Stomach (tissue), 19 donors: ENCODE measurements at regions of chr17 and their contacts with region 1.

Region 1: DNA sequence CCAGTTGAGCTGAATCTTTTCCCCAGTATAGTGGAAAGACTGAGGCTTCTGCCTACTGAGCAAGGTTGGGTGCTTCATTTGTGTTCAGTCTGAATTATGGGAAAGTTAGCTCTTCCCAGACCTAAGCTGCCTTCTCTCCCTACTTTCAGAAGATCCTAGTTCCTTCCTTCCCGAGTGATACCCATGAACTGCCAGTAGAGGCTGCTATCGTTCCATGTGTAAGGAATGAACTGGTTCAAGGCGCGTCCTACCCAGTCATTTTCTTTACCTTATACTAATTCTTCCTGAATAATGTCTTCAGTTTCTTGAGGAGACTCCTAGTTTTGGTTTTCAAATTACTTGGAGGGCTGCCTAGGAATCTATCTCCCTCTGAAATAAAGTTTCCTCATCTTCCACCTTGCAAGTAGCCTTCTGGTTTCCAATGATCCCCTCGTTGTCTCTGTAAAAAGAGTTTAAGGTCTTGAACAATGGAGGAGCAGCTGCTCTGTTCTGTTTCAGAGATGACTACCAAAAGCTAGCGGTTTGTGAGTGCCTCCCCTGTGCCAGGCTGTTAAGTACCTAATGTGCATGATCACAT is 934 bp upstream of the AOC2 start:
- DNase-seq: peak in 1 of 2 donors; percentile 87
- H3K4me3 ChIP-seq: no peak overlapping the region
- H3K27ac ChIP-seq: peak overlapping the region in 1 of 5 donors; percentile 60
- H3K4me1 ChIP-seq: peaks cover 5 to 37% (median 20%) of the 10 kb centered on the region in 4 donors
- H3K27me3 ChIP-seq: no peaks in the 10 kb centered on the region
- CTCF ChIP-seq: peak in 5 of 7 experiments; percentile 81 to 96 (median 86)
- EP300 ChIP-seq: no peak
- POLR2A ChIP-seq: no peak

Region 2: GRCh38 chr17:42097691-42098631 is 745.5 kb before region 1 on chr17 and contains the start of gene ZNF385C:
- intact Hi-C with region 1: no loop called
- DNase-seq: peak; percentile 41 to 60
- H3K4me3 ChIP-seq: peak within 1 kb of the TSS; percentile 17 to 38 (median 20)
- H3K27ac ChIP-seq: no peak within 1 kb of the TSS
- H3K4me1 ChIP-seq: peaks cover 10 to 19% (median 14%) of the 10 kb centered on the region in 4 donors
- H3K27me3 ChIP-seq: peaks cover 0 to 46% (median 25%) of the 10 kb centered on the region in 3 donors
- CTCF ChIP-seq: no peak
- EP300 ChIP-seq: no peak
- POLR2A ChIP-seq: no peak
- total RNA-seq, gene ZNF385C: 0.87 TPM in 1 of 5 donors, not detected in the others

Region 3: GRCh38 chr17:42928714-42929496 is 85.5 kb after region 1 on chr17:
- intact Hi-C with region 1: loop called (anchors 5 kb)
- DNase-seq: peak; percentile 36 to 88
- H3K4me3 ChIP-seq: no peak overlapping the region
- H3K27ac ChIP-seq: peak overlapping the region; percentile 69 to 87 (median 75)
- H3K4me1 ChIP-seq: peaks cover 6 to 17% (median 10%) of the 10 kb centered on the region in 4 donors
- H3K27me3 ChIP-seq: no peaks in the 10 kb centered on the region
- CTCF ChIP-seq: peak in 5 of 7 experiments; percentile 53 to 89 (median 74)
- EP300 ChIP-seq: no peak
- POLR2A ChIP-seq: no peak

Region 4: GRCh38 chr17:42944211-42944610 is 100.8 kb after region 1 on chr17:
- intact Hi-C with region 1: loop called (anchors 5 kb)
- DNase-seq: no peak
- H3K4me3 ChIP-seq: no peak overlapping the region
- H3K27ac ChIP-seq: no peak overlapping the region
- H3K4me1 ChIP-seq: peaks cover 0 to 15% (median 0%) of the 10 kb centered on the region in 4 donors
- H3K27me3 ChIP-seq: no peaks in the 10 kb centered on the region
- CTCF ChIP-seq: no peak
- EP300 ChIP-seq: no peak
- POLR2A ChIP-seq: no peak